OCI-LY7 (cell line): ENCODE measurements at regions of chr14 and their contacts with region 1.

Region 1: GRCh38 chr14:73173092-73173735 is 36.9 kb downstream of the PSEN1 start:
- DNase-seq: peak; percentile 72
- H3K4me3 ChIP-seq: no peak overlapping the region
- H3K27ac ChIP-seq: no peak overlapping the region
- H3K4me1 ChIP-seq: no peaks in the 10 kb centered on the region
- CTCF ChIP-seq: peak; percentile 90

Region 2: DNA sequence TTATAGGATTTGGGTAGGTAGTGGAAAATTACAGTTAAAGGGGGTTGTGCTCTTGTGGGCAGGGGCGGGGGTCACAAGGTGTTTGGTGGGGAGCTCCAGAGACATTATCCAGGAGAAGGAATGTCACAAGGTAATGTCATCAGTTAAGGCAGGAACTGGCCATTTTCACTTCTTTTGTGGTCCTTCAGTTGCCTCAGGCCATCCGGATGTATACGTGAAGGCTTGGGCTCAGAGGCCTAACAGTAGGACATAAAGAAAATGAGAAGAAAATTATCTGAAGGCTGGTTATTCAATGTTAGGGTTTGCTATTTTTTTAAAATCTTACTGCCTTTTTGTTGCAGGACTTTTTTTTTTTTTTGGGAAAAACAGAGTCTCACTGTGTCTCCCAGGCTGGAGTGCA is 39.4 kb before region 1 on chr14:
- CTCF ChIA-PET with region 1: no interaction called
- POLR2A ChIA-PET with region 1: no interaction called
- intact Hi-C with region 1: no loop called
- DNase-seq: peak; percentile 6
- H3K4me3 ChIP-seq: no peak overlapping the region
- H3K27ac ChIP-seq: no peak overlapping the region
- H3K4me1 ChIP-seq: peaks cover 13% of the 10 kb centered on the region
- CTCF ChIP-seq: no peak

Region 3: DNA sequence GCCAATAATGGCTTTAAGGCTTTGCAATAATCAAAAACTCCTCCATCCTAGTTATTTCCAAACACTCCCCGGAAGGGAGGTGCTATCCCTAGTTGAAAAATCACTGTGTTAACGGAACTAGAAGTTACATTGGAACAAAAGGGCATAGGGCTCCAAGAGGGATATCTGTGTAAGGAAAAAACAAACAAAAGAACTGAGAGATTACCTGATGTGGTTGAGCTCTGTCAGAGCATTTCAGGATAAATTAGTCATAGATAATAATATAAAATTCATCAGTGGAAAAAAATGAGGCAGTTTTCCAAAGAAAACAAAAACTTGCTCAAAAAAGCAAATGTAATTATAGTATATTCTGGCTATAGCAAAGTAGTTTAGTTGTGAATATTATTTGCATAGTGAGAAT is 36.7 kb after region 1 on chr14:
- CTCF ChIA-PET with region 1: no interaction called
- POLR2A ChIA-PET with region 1: no interaction called
- intact Hi-C with region 1: no loop called
- DNase-seq: no peak
- H3K4me3 ChIP-seq: no peak overlapping the region
- H3K27ac ChIP-seq: no peak overlapping the region
- H3K4me1 ChIP-seq: no peaks in the 10 kb centered on the region
- CTCF ChIP-seq: no peak

Region 4: GRCh38 chr14:73283608-73284379 is 110.6 kb after region 1 on chr14:
- CTCF ChIA-PET with region 1: no interaction called
- POLR2A ChIA-PET with region 1: no interaction called
- intact Hi-C with region 1: loop called (anchors 5 kb)
- DNase-seq: no peak
- H3K4me3 ChIP-seq: no peak overlapping the region
- H3K27ac ChIP-seq: no peak overlapping the region
- H3K4me1 ChIP-seq: no peaks in the 10 kb centered on the region
- CTCF ChIP-seq: 0 out of 2 replicates have a peak, but pooled peaks have one; percentile 35

Region 5: DNA sequence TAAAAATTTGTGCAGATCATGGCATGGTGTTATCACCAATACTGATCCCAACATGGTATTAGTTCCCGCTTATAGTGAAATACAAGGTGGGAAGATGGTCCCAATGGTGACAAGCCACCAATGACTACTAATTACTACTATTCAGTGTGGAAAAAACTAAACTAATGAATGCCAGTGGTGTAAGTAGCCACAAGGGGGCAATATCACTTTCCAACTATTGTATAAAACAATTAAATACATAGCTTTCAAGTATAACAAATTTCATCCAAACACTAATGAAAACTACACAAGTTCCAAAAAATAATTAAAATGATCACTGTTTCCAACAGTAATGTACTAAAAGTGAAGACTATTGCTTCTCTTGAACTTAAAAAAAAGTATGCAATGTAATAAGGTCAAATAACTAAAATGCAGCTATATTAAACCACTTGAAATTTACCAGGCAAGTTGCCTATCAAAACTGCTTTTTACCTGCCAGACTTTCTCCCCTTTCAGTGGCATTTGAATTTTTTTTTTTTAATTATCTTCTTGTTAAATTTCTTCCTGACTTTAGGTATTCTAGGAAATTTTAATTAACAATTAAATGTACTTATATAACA is 122.1 kb after region 1 on chr14:
- CTCF ChIA-PET with region 1: no interaction called
- POLR2A ChIA-PET with region 1: no interaction called
- intact Hi-C with region 1: loop called (anchors 5 kb)
- DNase-seq: peak; percentile 76
- H3K4me3 ChIP-seq: no peak overlapping the region
- H3K27ac ChIP-seq: no peak overlapping the region
- H3K4me1 ChIP-seq: no peaks in the 10 kb centered on the region
- CTCF ChIP-seq: peak; percentile 95

Region 6: GRCh38 chr14:73472185-73473114 is 299.2 kb after region 1 on chr14:
- CTCF ChIA-PET with region 1: no interaction called
- POLR2A ChIA-PET with region 1: interaction called, 3 read pairs
- intact Hi-C with region 1: loop called (anchors 1 kb)
- DNase-seq: peak; percentile 79
- H3K4me3 ChIP-seq: no peak overlapping the region
- H3K27ac ChIP-seq: no peak overlapping the region
- H3K4me1 ChIP-seq: no peaks in the 10 kb centered on the region
- CTCF ChIP-seq: peak; percentile 87